PC-9 (cell line): ENCODE measurements at regions of chr17 and their contacts with region 1.

Region 1: DNA sequence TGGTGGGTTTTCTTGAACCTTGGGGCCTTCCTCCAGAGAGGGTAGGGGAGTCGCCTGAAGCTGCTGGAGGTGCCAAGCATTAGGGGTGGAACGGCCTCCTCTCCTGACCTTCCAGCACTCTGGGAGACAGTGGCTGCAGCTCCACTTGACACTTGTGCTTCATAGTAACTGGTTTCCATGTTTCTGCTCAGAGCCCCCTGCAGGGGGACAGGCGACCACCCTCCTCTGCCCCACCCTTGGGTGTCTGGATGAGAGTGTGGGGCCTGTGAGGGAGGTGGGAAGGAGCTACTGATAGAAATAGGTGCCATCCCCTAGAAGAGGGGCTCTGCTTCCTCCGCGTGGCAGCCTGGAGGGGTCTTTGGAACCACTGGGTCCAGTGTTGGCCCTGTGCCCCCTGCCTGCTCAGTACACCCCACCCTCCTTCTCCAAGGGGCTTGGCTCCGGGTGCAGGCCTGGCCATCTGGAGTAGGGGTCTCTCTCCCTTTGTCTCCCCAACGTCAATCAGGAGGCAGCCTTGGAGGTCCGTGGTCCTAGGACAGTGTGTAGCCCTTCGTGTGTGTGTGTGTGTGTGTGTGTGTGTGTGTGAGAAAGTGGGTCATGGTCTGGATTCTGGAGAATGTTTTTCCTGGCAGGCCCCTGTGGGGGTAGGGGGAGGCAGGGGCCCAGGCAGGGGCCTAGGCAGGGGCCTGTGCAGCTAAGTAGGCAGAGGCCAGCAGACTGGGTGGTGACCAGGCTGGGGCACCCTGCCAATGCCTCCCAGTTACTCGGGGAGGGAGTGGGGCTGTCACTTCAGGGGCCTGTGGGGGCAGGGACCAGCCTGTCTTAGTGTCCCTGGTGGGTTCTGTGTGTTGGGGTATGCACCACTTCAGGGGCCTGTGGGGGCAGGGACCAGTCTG is 4.9 kb downstream of the LASP1 start:
- DNase-seq: no peak
- H3K4me3 ChIP-seq: 0 out of 2 replicates have a peak overlapping the region, but pooled peaks have one; percentile 27
- H3K27ac ChIP-seq: peak overlapping the region; percentile 40; the same call in 1 of the 2 replicates
- H3K4me1 ChIP-seq: peaks cover 76% of the 10 kb centered on the region
- H3K27me3 ChIP-seq: no peaks in the 10 kb centered on the region
- CTCF ChIP-seq: no peak

Region 2: GRCh38 chr17:38728290-38728896 is 146.4 kb before region 1 on chr17:
- CTCF ChIA-PET with region 1: no interaction called
- POLR2A ChIA-PET with region 1: interaction called, 10 read pairs
- intact Hi-C with region 1: no loop called
- DNase-seq: no peak
- H3K4me3 ChIP-seq: no peak overlapping the region
- H3K27ac ChIP-seq: no peak overlapping the region
- H3K4me1 ChIP-seq: peaks cover 11% of the 10 kb centered on the region
- H3K27me3 ChIP-seq: no peaks in the 10 kb centered on the region
- CTCF ChIP-seq: no peak

Region 3: GRCh38 chr17:38994026-38994425 is 119.3 kb after region 1 on chr17:
- CTCF ChIA-PET with region 1: no interaction called
- POLR2A ChIA-PET with region 1: no interaction called
- intact Hi-C with region 1: no loop called
- DNase-seq: no peak
- H3K4me3 ChIP-seq: no peak overlapping the region
- H3K27ac ChIP-seq: no peak overlapping the region
- H3K4me1 ChIP-seq: peaks cover 6% of the 10 kb centered on the region
- H3K27me3 ChIP-seq: no peaks in the 10 kb centered on the region
- CTCF ChIP-seq: no peak